Right ventricle myocardium superior (tissue), 1 donor: ENCODE measurements at regions of chr17 and their contacts with region 1.

Region 1: GRCh38 chr17:57440522-57441485 is 184.5 kb downstream of the MSI2 start:
- DNase-seq: peak; percentile 69
- ATAC-seq: peak; percentile 87

Region 2: DNA sequence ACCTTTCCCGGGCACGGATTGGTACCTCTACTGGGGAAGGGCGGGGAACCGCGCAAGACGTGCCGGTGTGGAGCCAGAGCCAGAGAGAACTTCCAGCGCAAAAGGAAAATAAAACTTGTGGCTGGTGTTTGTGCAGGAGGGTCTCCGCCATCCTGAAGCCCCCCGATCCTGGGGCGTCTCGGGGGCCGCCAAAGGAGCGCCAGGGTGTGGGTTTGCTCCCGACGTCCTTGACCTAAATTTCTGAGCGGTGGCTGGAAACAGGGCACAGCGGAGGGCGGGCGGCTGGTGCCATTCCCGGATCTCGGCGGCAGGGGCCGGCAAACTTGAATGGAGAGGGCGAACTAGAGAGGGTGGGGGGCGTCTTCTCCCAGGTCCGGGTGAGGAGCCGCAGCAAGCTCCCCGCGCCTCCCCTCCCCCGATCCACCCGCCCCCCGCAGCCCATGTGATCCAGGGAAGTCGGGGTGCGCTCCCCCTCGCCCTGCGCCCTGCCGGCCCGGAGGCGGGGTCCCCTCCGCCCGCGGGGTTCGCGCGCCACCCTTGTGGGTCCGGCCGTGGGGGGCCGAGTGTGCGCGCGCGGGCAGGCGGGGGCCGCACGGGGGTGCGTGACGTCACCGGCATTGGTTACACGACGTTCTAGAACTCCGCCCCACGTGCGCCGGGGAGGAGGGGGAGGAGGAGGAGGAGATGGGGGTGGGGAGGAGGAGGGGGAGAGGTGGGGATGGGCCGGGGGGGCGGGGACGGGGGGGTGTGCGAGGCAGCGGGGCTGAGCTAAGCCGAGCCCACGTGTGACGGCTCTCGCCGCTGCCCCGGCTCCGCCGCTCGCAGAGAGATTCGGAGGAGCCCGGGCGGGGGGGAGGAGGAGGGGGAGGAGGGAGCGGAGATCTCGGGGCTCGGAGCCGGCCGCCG is 184.8 kb before region 1 on chr17 and contains the start of gene MSI2:
- intact Hi-C with region 1: loop called (anchors 10 kb)
- DNase-seq: peak; percentile 97
- ATAC-seq: peak; percentile 89
- total RNA-seq, gene MSI2: 110 TPM